Caco-2 (cell line): ENCODE measurements at regions of chr12 and their contacts with region 1.

Region 1: GRCh38 chr12:115423546-115423987 is 739.6 kb upstream of the TBX3 start:
- DNase-seq: peak in 1 of 2 experiments; percentile 30
- H3K4me3 ChIP-seq: no peak overlapping the region
- H3K4me3 Mint-ChIP-seq: peak overlapping the region; percentile 3
- H3K27ac Mint-ChIP-seq: no peak overlapping the region
- H3K4me1 ChIP-seq: peaks cover 26% of the 10 kb centered on the region
- H3K4me1 Mint-ChIP-seq: peaks cover 7% of the 10 kb centered on the region
- H3K27me3 ChIP-seq: no peaks in the 10 kb centered on the region
- H3K27me3 Mint-ChIP-seq: no peaks in the 10 kb centered on the region
- CTCF ChIP-seq: no peak

Region 2: DNA sequence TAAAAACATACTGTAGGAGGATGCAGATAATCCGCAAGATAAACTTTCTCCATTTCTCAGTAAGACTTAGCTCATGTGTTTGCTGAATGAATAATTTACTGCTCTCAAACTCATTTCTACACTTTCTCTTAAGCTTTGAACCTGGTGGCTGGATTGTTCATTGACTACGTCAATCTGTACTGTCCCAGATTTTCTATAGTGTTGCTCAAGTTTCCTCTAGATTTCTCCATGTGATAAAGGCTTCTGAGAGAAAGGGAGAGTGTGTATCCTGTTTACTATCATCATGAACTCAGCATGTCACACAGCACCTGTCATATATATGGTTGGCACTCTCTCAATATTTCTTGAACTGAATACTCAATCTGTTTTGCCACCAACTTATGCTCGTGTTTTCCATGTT is 221.6 kb before region 1 on chr12:
- CTCF ChIA-PET with region 1: no interaction called
- POLR2A ChIA-PET with region 1: interaction called, 11 read pairs
- intact Hi-C with region 1: no loop called
- DNase-seq: no peak
- H3K4me3 ChIP-seq: no peak overlapping the region
- H3K4me3 Mint-ChIP-seq: no peak overlapping the region
- H3K27ac Mint-ChIP-seq: no peak overlapping the region
- H3K4me1 ChIP-seq: peaks cover 5% of the 10 kb centered on the region
- H3K4me1 Mint-ChIP-seq: peaks cover 9% of the 10 kb centered on the region
- H3K27me3 ChIP-seq: no peaks in the 10 kb centered on the region
- H3K27me3 Mint-ChIP-seq: no peaks in the 10 kb centered on the region
- CTCF ChIP-seq: no peak

Region 3: GRCh38 chr12:115341442-115341841 is 82.1 kb before region 1 on chr12:
- CTCF ChIA-PET with region 1: no interaction called
- POLR2A ChIA-PET with region 1: no interaction called
- intact Hi-C with region 1: no loop called
- DNase-seq: no peak
- H3K4me3 ChIP-seq: no peak overlapping the region
- H3K4me3 Mint-ChIP-seq: no peak overlapping the region
- H3K27ac Mint-ChIP-seq: no peak overlapping the region
- H3K4me1 ChIP-seq: no peaks in the 10 kb centered on the region
- H3K4me1 Mint-ChIP-seq: no peaks in the 10 kb centered on the region
- H3K27me3 ChIP-seq: no peaks in the 10 kb centered on the region
- H3K27me3 Mint-ChIP-seq: no peaks in the 10 kb centered on the region
- CTCF ChIP-seq: no peak

Region 4: DNA sequence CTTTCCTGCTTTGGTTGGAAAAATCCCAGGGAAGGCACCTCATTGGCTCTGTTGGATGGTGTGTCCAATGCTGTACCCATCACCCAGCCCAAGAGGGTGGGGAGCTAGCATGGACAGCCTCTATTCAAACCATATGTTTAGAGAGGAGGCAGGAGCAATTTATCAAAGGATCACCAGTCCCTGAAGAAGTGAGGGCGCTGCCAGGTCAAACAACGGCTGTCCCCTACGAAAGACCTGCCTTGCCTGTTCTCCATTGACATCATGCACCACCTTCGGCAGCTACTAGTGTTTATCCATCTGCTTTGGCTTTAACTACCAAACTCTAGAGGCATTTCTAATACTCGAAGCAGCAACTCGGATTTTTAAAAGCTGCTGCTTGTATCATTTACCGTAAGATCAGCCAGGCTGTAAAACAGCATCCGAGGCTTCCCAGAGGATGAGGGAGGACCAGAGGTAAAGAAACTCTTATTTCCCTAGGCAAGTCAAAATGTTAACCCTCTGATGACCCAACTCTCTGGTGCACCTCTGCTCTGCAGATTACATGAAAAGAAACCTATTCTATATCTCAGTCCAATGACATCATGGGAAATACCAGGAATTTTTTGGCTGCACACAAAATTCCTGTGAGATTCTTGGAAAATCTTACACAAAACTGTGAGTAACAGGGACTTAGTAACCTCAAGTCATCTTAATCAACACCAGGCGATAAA is 18.7 kb before region 1 on chr12:
- CTCF ChIA-PET with region 1: no interaction called
- POLR2A ChIA-PET with region 1: no interaction called
- intact Hi-C with region 1: loop called (anchors 2 kb)
- DNase-seq: no peak
- H3K4me3 ChIP-seq: no peak overlapping the region
- H3K4me3 Mint-ChIP-seq: no peak overlapping the region
- H3K27ac Mint-ChIP-seq: no peak overlapping the region
- H3K4me1 ChIP-seq: peaks cover 32% of the 10 kb centered on the region
- H3K4me1 Mint-ChIP-seq: peaks cover 17% of the 10 kb centered on the region
- H3K27me3 ChIP-seq: no peaks in the 10 kb centered on the region
- H3K27me3 Mint-ChIP-seq: no peaks in the 10 kb centered on the region
- CTCF ChIP-seq: no peak

Region 5: GRCh38 chr12:115451780-115452736 is 28.5 kb after region 1 on chr12:
- CTCF ChIA-PET with region 1: no interaction called
- POLR2A ChIA-PET with region 1: no interaction called
- intact Hi-C with region 1: loop called (anchors 2 kb)
- DNase-seq: peak in 1 of 2 experiments; percentile 62
- H3K4me3 ChIP-seq: peak overlapping the region; percentile 39
- H3K4me3 Mint-ChIP-seq: peak overlapping the region; percentile 69
- H3K27ac Mint-ChIP-seq: no peak overlapping the region
- H3K4me1 ChIP-seq: 0 out of 2 replicates have a peak, but pooled peaks cover 16% of the 10 kb centered on the region
- H3K4me1 Mint-ChIP-seq: peaks cover 5% of the 10 kb centered on the region
- H3K27me3 ChIP-seq: no peaks in the 10 kb centered on the region
- H3K27me3 Mint-ChIP-seq: no peaks in the 10 kb centered on the region
- CTCF ChIP-seq: no peak

Region 6: DNA sequence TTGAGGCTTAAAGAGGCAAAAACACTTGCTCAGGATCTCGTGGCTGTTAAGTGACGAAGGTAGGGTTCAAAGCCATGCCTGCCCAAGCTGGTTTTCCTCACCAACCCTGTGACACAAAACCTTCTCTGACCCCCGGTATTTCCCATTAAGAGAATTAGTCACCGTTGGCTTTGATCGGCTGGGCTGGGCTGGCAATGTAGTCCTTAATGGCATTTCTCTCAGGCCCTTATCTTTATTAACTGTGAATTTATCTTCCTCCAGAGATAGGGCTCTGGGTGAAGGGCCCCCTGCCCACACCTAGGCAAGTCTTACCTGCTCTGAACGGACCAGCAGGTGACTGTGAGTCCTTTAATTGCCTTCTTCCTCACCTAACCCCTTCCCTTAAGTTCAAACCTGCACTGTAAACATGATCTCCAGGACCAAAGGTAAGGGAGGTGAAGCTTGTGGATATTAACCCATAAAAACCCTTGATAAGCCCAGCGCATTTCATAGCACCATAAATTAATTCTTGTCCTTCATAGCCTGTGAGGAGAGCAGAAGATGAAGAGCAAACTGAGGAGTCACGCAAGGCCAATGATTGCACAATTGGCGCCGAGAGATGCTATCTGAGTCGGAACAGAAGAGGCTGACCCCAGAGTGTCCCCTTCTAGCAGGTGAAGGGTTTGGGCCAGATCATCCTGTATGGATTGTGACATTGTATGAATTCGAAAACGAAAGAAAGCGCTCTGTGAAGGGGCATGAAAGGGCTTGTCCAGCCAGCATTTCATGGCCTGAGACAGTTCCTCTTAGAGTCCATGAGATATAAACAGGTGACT is 51.2 kb after region 1 on chr12:
- CTCF ChIA-PET with region 1: no interaction called
- POLR2A ChIA-PET with region 1: no interaction called
- intact Hi-C with region 1: loop called (anchors 2 kb)
- DNase-seq: peak; percentile 72 to 93
- H3K4me3 ChIP-seq: no peak overlapping the region
- H3K4me3 Mint-ChIP-seq: peak overlapping the region; percentile 28
- H3K27ac Mint-ChIP-seq: no peak overlapping the region
- H3K4me1 ChIP-seq: peaks cover 28% of the 10 kb centered on the region
- H3K4me1 Mint-ChIP-seq: peaks cover 15% of the 10 kb centered on the region
- H3K27me3 ChIP-seq: no peaks in the 10 kb centered on the region
- H3K27me3 Mint-ChIP-seq: no peaks in the 10 kb centered on the region
- CTCF ChIP-seq: no peak